ENCODE measurements at regions of chr19 and their contacts with region 1.

Region 1: GRCh38 chr19:36528194-36528920 is at the start of gene ZNF260:
- DNase-seq: peak; percentile 89
- H3K4me3 Mint-ChIP-seq: peak within 1 kb of the TSS; percentile 95
- H3K27ac Mint-ChIP-seq: peak within 1 kb of the TSS; percentile 93
- H3K4me1 Mint-ChIP-seq: peaks cover 22% of the 10 kb centered on the region
- H3K27me3 Mint-ChIP-seq: peaks cover 1% of the 10 kb centered on the region
- total RNA-seq, gene ZNF260: 7.5 and 8.9 TPM in 2 replicates

Region 2: GRCh38 chr19:36128392-36128736 is 400.0 kb before region 1 on chr19:
- intact Hi-C with region 1: no loop called
- DNase-seq: no peak
- H3K4me3 Mint-ChIP-seq: peak overlapping the region; percentile 83
- H3K27ac Mint-ChIP-seq: peak overlapping the region; percentile 95
- H3K4me1 Mint-ChIP-seq: peaks cover 24% of the 10 kb centered on the region
- H3K27me3 Mint-ChIP-seq: no peaks in the 10 kb centered on the region

Region 3: GRCh38 chr19:36207605-36208252 is 320.6 kb before region 1 on chr19:
- intact Hi-C with region 1: no loop called
- DNase-seq: no peak
- H3K4me3 Mint-ChIP-seq: no peak overlapping the region
- H3K27ac Mint-ChIP-seq: no peak overlapping the region
- H3K4me1 Mint-ChIP-seq: no peaks in the 10 kb centered on the region
- H3K27me3 Mint-ChIP-seq: no peaks in the 10 kb centered on the region

Region 4: DNA sequence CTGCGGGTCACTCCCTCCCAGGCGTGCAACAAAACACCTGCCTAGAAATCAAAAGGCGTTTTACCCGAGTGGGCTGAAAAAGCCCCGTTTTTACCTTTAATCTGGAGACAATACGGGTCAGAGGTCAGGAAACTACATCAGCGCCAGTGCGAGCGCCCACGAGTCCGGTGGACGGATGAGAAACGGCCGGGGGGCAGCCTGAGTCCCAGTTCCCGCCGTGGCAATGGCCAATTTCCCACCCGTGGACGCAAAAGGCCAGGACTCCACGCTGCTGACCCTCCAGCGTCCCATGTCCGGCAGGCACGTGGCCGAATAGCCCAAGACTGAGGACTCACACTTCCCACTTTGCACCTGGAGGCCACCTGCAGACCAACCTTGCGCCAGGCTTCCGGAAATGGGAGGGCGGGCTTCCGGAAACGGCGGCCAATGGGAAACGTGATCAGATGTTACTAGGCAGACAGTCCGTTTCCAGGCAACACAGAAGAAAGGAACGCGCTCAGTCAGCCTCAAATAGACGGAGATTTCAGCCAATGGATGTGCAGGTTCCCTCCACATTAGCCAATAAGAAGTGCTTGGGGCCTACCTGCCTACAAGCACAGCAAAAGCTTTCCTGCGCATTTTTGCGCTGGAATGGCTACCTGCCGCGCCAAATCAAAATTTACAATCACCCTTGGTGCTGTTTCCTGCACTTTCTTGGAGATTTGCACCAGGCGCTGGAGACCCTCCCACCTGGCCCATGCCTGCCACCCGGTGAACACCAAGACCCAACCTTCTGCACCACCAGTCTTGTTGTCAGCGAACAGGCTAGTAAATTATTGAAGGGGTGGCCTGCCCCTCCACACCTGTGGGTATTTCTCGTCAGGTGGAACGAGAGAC is 196.8 kb before region 1 on chr19:
- intact Hi-C with region 1: no loop called
- DNase-seq: peak; percentile 39
- H3K4me3 Mint-ChIP-seq: peak overlapping the region; percentile 70
- H3K27ac Mint-ChIP-seq: no peak overlapping the region
- H3K4me1 Mint-ChIP-seq: no peaks in the 10 kb centered on the region
- H3K27me3 Mint-ChIP-seq: no peaks in the 10 kb centered on the region

Region 5: DNA sequence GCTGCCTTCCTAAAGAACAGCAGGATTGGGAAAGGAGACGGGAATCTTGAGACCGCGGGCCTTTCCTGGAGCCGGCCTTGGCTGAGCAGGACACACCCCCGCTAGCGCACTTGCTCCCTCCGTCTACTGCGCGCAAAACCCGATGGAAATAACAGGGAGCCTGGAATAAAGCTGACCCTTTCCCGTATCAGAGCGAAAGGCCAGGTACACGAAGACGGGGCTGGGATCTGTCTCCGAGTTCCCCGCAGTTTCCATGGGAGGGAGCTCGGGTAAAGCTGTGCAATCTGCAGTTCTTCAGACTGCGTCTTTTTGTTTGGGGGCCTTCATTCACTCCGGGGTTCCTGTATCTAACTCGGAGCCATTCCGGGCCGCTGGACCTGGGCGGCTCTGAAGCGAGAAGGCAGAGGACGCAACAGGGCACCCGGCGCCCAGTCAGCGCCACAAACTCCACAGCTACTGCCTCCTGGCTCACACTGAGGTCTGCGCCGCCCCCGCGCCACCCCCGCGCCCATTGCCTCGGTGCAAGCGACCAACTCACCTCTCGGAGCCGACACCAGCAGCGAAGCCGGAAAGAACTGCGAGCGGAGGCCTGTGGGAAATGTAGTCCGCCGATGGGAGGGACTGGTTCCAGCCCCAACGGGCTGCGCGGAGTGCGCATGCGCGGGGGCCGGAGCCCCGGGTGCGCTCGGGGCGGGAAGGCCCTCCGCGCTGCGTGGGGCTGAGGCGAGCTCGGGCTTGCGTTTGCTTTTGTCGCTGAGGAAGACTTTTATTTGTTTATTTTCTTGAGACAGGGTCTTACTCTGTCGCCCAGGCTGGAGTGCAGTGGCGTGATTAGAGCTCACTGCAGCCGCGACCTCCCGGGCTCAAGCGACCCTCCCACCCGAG is 149.5 kb before region 1 on chr19 and contains the start of gene ZFP14:
- intact Hi-C with region 1: loop called (anchors 1 kb)
- DNase-seq: peak; percentile 91
- H3K4me3 Mint-ChIP-seq: peak within 1 kb of the TSS; percentile 86
- H3K27ac Mint-ChIP-seq: peak within 1 kb of the TSS; percentile 73
- H3K4me1 Mint-ChIP-seq: peaks cover 13% of the 10 kb centered on the region
- H3K27me3 Mint-ChIP-seq: no peaks in the 10 kb centered on the region
- total RNA-seq, gene ZFP14: 0.83 and 1.7 TPM in 2 replicates

Region 6: GRCh38 chr19:36514012-36514612 is 14.2 kb before region 1 on chr19:
- intact Hi-C with region 1: no loop called
- DNase-seq: no peak
- H3K4me3 Mint-ChIP-seq: no peak overlapping the region
- H3K27ac Mint-ChIP-seq: no peak overlapping the region
- H3K4me1 Mint-ChIP-seq: no peaks in the 10 kb centered on the region
- H3K27me3 Mint-ChIP-seq: no peaks in the 10 kb centered on the region

Region 7: GRCh38 chr19:36573020-36573885 is 44.9 kb after region 1 on chr19 and contains the start of gene ZNF529:
- intact Hi-C with region 1: loop called (anchors 1 kb)
- DNase-seq: peak; percentile 85
- H3K4me3 Mint-ChIP-seq: peak within 1 kb of the TSS; percentile 89
- H3K27ac Mint-ChIP-seq: peak within 1 kb of the TSS; percentile 98
- H3K4me1 Mint-ChIP-seq: peaks cover 31% of the 10 kb centered on the region
- H3K27me3 Mint-ChIP-seq: no peaks in the 10 kb centered on the region
- total RNA-seq, gene ZNF529: 20.3 and 20.7 TPM in 2 replicates

Region 8: GRCh38 chr19:36665832-36666231 is 137.5 kb after region 1 on chr19:
- intact Hi-C with region 1: loop called (anchors 1 kb)
- DNase-seq: no peak
- H3K4me3 Mint-ChIP-seq: peak overlapping the region; percentile 99
- H3K27ac Mint-ChIP-seq: peak overlapping the region; percentile 26
- H3K4me1 Mint-ChIP-seq: peaks cover 16% of the 10 kb centered on the region
- H3K27me3 Mint-ChIP-seq: no peaks in the 10 kb centered on the region

Region 9: GRCh38 chr19:36837906-36838783 is 309.8 kb after region 1 on chr19 and contains the start of gene ZNF790:
- intact Hi-C with region 1: loop called (anchors 5 kb)
- DNase-seq: peak; percentile 81
- H3K4me3 Mint-ChIP-seq: no peak within 1 kb of the TSS
- H3K27ac Mint-ChIP-seq: no peak within 1 kb of the TSS
- H3K4me1 Mint-ChIP-seq: no peaks in the 10 kb centered on the region
- H3K27me3 Mint-ChIP-seq: no peaks in the 10 kb centered on the region
- total RNA-seq, gene ZNF790: 4.4 and 4.5 TPM in 2 replicates

Region 10: GRCh38 chr19:37172368-37173366 is 644.3 kb after region 1 on chr19 and contains the start of gene ZNF585A:
- intact Hi-C with region 1: loop called (anchors 1 kb)
- DNase-seq: peak; percentile 74
- H3K4me3 Mint-ChIP-seq: no peak within 1 kb of the TSS
- H3K27ac Mint-ChIP-seq: no peak within 1 kb of the TSS
- H3K4me1 Mint-ChIP-seq: no peaks in the 10 kb centered on the region
- H3K27me3 Mint-ChIP-seq: no peaks in the 10 kb centered on the region
- total RNA-seq, gene ZNF585A: 1.2 and 2.6 TPM in 2 replicates

Region 11: GRCh38 chr19:37370880-37371661 is 842.7 kb after region 1 on chr19 and contains the start of gene ZNF527:
- intact Hi-C with region 1: loop called (anchors 1 kb)
- DNase-seq: peak; percentile 96
- H3K4me3 Mint-ChIP-seq: peak within 1 kb of the TSS; percentile 99
- H3K27ac Mint-ChIP-seq: peak within 1 kb of the TSS; percentile 87
- H3K4me1 Mint-ChIP-seq: peaks cover 13% of the 10 kb centered on the region
- H3K27me3 Mint-ChIP-seq: no peaks in the 10 kb centered on the region
- total RNA-seq, gene ZNF527: 3.9 and 4.5 TPM in 2 replicates